ENCODE measurements at regions of chr1 and their contacts with region 1.

Region 1: GRCh38 chr1:203216274-203217138 is 13.0 kb downstream of the CHIT1 start:
- DNase-seq: peak; percentile 33
- H3K4me3 ChIP-seq: no peak overlapping the region
- H3K27ac ChIP-seq: no peak overlapping the region
- H3K27me3 ChIP-seq: peaks cover 42% of the 10 kb centered on the region
- CTCF ChIP-seq: peak; percentile 65

Region 2: GRCh38 chr1:203127666-203128430 is 88.7 kb before region 1 on chr1 and contains the start of gene ADORA1:
- CTCF ChIA-PET with region 1: interaction called, 24 read pairs
- POLR2A ChIA-PET with region 1: interaction called, 3 read pairs
- DNase-seq: no peak
- H3K4me3 ChIP-seq: peak within 1 kb of the TSS; percentile 55
- H3K27ac ChIP-seq: no peak within 1 kb of the TSS
- H3K27me3 ChIP-seq: peaks cover 57% of the 10 kb centered on the region
- CTCF ChIP-seq: 0 out of 2 replicates have a peak, but pooled peaks have one; percentile 3
- polyA plus RNA-seq, gene ADORA1: 1.7 and 2.1 TPM in 2 replicates

Region 3: GRCh38 chr1:203166566-203166940 is 50.0 kb before region 1 on chr1:
- CTCF ChIA-PET with region 1: interaction called, 15 read pairs
- POLR2A ChIA-PET with region 1: no interaction called
- DNase-seq: no peak
- H3K4me3 ChIP-seq: no peak overlapping the region
- H3K27ac ChIP-seq: no peak overlapping the region
- H3K27me3 ChIP-seq: peaks cover 32% of the 10 kb centered on the region
- CTCF ChIP-seq: peak; percentile 35

Region 4: GRCh38 chr1:203172128-203173010 is 44.1 kb before region 1 on chr1:
- CTCF ChIA-PET with region 1: interaction called, 13 read pairs
- POLR2A ChIA-PET with region 1: no interaction called
- DNase-seq: peak; percentile 21
- H3K4me3 ChIP-seq: no peak overlapping the region
- H3K27ac ChIP-seq: no peak overlapping the region
- H3K27me3 ChIP-seq: peaks cover 8% of the 10 kb centered on the region
- CTCF ChIP-seq: peak; percentile 81

Region 5: GRCh38 chr1:203202431-203203245 is 13.9 kb before region 1 on chr1:
- CTCF ChIA-PET with region 1: interaction called, 32 read pairs
- POLR2A ChIA-PET with region 1: no interaction called
- DNase-seq: peak; percentile 90
- H3K4me3 ChIP-seq: no peak overlapping the region
- H3K27ac ChIP-seq: peak overlapping the region; percentile 92
- H3K27me3 ChIP-seq: peaks cover 3% of the 10 kb centered on the region
- CTCF ChIP-seq: 0 out of 2 replicates have a peak, but pooled peaks have one; percentile 2